ENCODE measurements at regions of chr17 and their contacts with region 1.

Region 1: DNA sequence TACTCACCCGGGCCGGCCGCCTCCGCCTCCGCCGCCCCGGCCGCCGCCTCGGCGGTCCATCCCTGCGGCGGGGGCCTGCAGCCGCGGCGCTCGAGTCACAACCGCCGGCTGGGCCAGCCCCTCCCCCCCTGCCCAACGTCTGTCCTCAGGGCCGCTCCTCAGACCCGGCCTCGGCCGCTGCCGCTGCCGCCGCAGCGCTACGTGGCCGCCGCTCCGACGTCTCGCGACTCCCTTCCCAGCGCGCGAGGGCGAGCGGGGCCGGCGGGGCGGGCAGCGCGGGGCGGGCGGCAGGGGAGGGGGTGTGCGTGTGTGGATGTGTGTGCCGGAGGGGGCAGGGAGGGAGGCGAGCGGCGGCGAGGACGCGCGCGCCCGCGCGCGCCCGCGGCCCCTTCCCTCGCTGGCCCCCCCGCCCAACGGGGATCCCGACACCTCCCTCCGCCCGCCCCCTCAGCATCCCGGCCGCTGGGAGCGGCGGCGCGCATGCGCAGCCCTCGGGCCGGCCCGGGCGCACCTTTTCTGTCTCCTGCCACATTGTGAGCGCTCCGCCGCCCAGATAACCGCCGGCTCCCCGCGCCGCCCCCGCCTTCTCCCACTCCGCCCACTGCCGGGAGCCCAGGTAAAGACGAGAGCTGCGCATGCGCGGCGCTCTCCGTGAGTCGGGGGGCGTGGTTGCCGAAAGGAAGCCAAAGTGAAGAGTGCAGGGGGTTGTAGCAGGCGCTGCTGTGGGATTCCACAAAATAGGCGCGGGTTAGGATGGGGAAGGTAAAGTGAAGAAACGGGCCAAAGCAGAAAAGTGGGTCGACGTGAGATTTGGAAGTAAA is at the start of gene ZNF652:
- DNase-seq: peak; percentile 92
- H3K4me3 ChIP-seq: peak within 1 kb of the TSS; percentile 89
- H3K27ac ChIP-seq: peak within 1 kb of the TSS; percentile 85
- H3K4me1 ChIP-seq: peaks cover 29% of the 10 kb centered on the region
- H3K27me3 ChIP-seq: no peaks in the 10 kb centered on the region
- CTCF ChIP-seq: no peak
- total RNA-seq, gene ZNF652: 32.1 and 41.5 TPM in 2 replicates

Region 2: GRCh38 chr17:49132699-49133364 is 229.3 kb before region 1 on chr17 and contains the start of gene B4GALNT2:
- CTCF ChIA-PET with region 1: no interaction called
- POLR2A ChIA-PET with region 1: no interaction called
- intact Hi-C with region 1: no loop called
- DNase-seq: no peak
- H3K4me3 ChIP-seq: peak within 1 kb of the TSS; percentile 45
- H3K27ac ChIP-seq: no peak within 1 kb of the TSS
- H3K4me1 ChIP-seq: no peaks in the 10 kb centered on the region
- H3K27me3 ChIP-seq: peaks cover 27% of the 10 kb centered on the region
- CTCF ChIP-seq: no peak
- total RNA-seq, gene B4GALNT2: not detected in 2 replicates

Region 3: GRCh38 chr17:49315551-49316257 is 46.4 kb before region 1 on chr17:
- CTCF ChIA-PET with region 1: no interaction called
- POLR2A ChIA-PET with region 1: interaction called, 21 read pairs
- intact Hi-C with region 1: no loop called
- DNase-seq: peak; percentile 89
- H3K4me3 ChIP-seq: peak overlapping the region; percentile 3
- H3K27ac ChIP-seq: no peak overlapping the region
- H3K4me1 ChIP-seq: peaks cover 57% of the 10 kb centered on the region
- H3K27me3 ChIP-seq: no peaks in the 10 kb centered on the region
- CTCF ChIP-seq: peak; percentile 85

Measured in A673 (cell line).